CD4-positive, alpha-beta T cell (primary cell): ENCODE measurements at regions of chr5 and their contacts with region 1.

Region 1: DNA sequence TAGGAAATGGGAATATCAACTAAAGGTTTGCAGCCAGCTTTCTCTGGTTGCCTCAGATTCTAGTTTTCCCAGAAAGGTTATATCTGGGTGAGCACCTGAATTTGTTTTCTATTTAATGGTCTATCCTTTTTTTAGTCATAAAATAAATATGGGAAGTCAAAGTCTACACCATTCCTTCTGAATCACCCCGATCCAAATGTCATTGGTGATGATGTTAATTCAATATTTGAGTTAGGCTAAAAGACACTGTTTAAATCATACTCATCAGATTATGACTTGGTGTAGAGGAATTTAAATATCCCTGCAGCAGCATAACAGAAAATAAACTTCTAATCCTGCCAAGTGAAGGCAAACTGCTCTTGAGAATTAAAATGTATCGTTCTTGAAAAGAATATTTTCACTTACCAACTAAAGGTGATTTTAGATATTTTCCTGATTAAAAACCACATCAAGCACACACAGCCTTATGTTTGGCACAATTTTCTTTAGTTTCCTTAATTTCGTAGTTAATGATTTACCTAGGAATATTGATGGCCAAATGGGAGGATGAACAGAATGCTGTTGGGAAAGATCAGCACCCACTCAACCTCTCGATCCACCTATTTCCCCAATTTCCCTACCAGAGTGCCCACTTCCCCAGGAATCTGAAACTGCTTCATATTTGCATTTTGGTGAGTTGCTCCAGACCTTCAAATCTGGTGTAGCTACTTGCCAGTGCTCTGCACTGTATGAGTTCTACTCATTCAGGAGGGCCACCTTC is 103.1 kb upstream of the TSLP start:
- DNase-seq: no peak
- ATAC-seq: no peak
- H3K4me3 ChIP-seq: no peak overlapping the region
- H3K4me3 Mint-ChIP-seq: no peak overlapping the region
- H3K27ac ChIP-seq: no peak overlapping the region
- H3K27ac Mint-ChIP-seq: no peak overlapping the region
- H3K4me1 ChIP-seq: no peaks in the 10 kb centered on the region
- H3K4me1 Mint-ChIP-seq: no peaks in the 10 kb centered on the region
- H3K27me3 ChIP-seq: no peaks in the 10 kb centered on the region
- H3K27me3 Mint-ChIP-seq: peaks cover 13% of the 10 kb centered on the region
- CTCF ChIP-seq: no peak

Region 2: DNA sequence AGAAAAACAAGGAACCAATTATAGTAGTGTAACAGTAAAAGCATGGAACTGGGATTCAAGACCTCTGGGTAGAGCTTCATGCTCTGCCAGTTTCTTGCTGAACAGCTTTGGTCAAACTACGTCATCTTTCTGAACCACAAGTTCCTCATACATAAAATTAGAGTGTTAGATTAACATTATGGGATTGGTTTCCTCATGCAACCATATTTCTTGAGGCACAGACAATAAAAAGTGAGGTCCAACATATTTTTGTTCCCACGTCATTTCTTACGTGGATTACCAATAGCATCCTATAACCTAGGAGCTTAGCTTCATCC is 596.7 kb before region 1 on chr5:
- CTCF ChIA-PET with region 1: no interaction called
- POLR2A ChIA-PET with region 1: no interaction called
- intact Hi-C with region 1: no loop called
- DNase-seq: peak in 1 of 14 experiments; percentile 2
- ATAC-seq: no peak
- H3K4me3 ChIP-seq: no peak overlapping the region
- H3K4me3 Mint-ChIP-seq: no peak overlapping the region
- H3K27ac ChIP-seq: no peak overlapping the region
- H3K27ac Mint-ChIP-seq: no peak overlapping the region
- H3K4me1 ChIP-seq: no peaks in the 10 kb centered on the region
- H3K4me1 Mint-ChIP-seq: no peaks in the 10 kb centered on the region
- H3K27me3 ChIP-seq: no peaks in the 10 kb centered on the region
- H3K27me3 Mint-ChIP-seq: no peaks in the 10 kb centered on the region
- CTCF ChIP-seq: no peak

Region 3: DNA sequence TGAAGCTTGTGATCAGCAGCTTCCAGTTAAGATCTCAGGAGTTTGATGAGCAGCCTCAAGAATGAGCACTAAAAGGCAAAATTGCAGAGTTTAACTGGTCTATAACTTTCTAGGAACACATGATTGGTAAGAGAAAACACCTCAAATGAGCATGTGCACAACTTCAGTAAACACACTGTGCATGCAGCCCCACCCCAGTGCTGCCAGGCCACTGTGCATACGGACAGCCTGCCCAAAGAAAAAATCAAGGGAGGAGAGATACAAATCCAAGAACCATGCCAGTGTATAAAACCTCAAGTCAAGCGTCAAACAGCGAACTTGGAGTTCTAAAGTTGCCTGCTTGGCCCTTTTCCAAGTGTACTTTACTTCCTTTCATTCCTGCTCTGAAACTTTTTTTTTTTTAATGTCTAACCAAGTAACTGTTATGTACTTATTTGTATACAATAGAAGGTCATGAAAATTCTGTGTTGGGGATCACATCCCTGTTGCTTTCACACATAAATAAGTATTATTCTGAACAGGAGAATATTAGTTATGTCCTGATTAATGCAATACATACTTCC is 22.5 kb before region 1 on chr5:
- CTCF ChIA-PET with region 1: no interaction called
- POLR2A ChIA-PET with region 1: no interaction called
- intact Hi-C with region 1: loop called in 1 of 2 experiments (anchors 2 kb)
- DNase-seq: no peak
- ATAC-seq: no peak
- H3K4me3 ChIP-seq: no peak overlapping the region
- H3K4me3 Mint-ChIP-seq: no peak overlapping the region
- H3K27ac ChIP-seq: no peak overlapping the region
- H3K27ac Mint-ChIP-seq: no peak overlapping the region
- H3K4me1 ChIP-seq: no peaks in the 10 kb centered on the region
- H3K4me1 Mint-ChIP-seq: no peaks in the 10 kb centered on the region
- H3K27me3 ChIP-seq: no peaks in the 10 kb centered on the region
- H3K27me3 Mint-ChIP-seq: peaks cover 4% of the 10 kb centered on the region
- CTCF ChIP-seq: no peak

Region 4: DNA sequence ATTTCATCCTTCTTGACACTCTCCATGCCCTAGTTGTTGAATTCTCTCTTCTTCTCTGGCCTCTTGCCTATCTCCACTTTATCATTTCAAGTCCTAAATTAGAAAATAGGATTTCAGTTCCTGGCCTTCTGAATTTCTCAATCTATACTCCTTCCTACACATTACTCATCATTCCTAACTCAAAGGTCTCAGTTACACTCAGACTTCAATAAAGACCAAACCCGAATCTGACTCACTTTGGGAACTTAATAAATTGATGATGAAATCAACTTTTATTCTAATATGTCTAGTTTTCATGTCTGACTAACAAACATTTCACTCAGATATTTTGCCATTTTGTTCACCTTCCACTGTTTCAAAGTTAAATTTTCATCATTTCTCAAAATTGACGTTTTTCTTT is 10.5 kb before region 1 on chr5:
- CTCF ChIA-PET with region 1: no interaction called
- POLR2A ChIA-PET with region 1: no interaction called
- intact Hi-C with region 1: no loop called
- DNase-seq: no peak
- ATAC-seq: no peak
- H3K4me3 ChIP-seq: no peak overlapping the region
- H3K4me3 Mint-ChIP-seq: no peak overlapping the region
- H3K27ac ChIP-seq: no peak overlapping the region
- H3K27ac Mint-ChIP-seq: no peak overlapping the region
- H3K4me1 ChIP-seq: no peaks in the 10 kb centered on the region
- H3K4me1 Mint-ChIP-seq: no peaks in the 10 kb centered on the region
- H3K27me3 ChIP-seq: peaks cover 0 to 2% of the 10 kb centered on the region in 2 experiments
- H3K27me3 Mint-ChIP-seq: peaks cover 5% of the 10 kb centered on the region
- CTCF ChIP-seq: no peak